Activated B cell treated with CpG ODN at 0.5 μM for 24 hours (primary cell): ENCODE measurements at regions of chr11 and their contacts with region 1.

Region 1: DNA sequence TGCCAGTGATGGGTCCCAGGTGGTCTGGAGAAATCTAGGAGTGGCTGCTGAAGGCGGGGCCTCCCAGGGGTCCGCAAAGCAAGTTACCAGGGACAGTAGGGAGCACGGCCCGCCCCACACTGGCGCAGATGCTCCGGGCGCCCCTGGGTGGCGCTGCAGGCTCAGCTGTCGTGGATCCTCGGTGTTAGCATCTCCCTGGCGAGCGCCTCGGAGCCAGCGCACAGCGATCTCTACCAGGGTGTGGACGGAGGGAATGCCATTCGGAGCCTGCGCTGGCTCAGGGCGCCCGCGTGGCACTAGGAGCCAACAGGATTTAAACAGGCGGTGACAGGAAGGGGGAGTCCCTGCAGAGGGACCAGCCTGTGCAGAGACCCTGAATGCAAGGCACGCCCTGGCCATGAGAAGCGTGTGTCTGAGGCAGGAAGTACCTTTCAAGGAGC is 20.2 kb downstream of the FADS3 start:
- DNase-seq: peak; percentile 76
- ATAC-seq: peak; percentile 95
- H3K4me3 Mint-ChIP-seq: peak overlapping the region; percentile 75
- H3K27ac Mint-ChIP-seq: peak overlapping the region; percentile 46
- H3K4me1 Mint-ChIP-seq: peaks cover 10% of the 10 kb centered on the region
- H3K27me3 Mint-ChIP-seq: no peaks in the 10 kb centered on the region
- CTCF ChIP-seq: peak; percentile 89

Region 2: DNA sequence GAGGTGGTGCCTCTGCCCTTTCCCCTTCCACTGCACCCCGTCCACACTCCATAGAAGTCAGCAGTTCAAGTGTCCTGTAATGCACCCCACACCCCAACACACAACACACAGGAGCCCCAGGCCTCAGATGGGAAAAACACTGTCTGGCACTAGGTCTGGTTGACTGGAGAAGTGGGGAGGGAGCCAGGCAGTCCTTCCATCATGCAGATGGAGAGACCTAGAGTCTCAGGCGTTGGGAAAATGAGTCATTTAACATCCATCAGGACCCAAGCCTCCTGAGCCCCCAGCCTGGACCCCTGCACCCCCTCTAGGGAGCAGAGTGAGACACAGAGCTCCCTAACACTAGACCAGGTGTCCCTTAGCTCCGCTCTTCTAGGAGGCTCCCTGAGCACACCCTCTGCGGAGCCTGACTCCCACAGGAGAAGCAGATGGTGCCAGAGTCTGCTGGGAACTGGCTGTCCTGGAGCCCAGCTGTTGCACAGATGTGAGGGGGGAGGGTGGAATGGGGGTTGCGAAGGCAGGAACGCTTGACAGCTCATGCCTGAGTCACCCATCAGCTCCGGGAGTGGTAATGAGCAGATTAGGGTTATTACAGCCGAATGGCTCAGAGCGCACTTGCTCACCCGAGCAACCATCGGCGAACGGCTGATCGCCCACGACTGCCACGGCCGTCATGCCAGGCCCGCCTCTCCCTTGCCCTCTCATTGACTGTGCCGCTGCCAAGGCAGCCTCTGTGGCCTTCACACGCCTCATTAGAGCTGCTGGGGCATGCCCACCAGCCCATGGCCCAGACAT is 268.2 kb before region 1 on chr11:
- CTCF ChIA-PET with region 1: no interaction called
- POLR2A ChIA-PET with region 1: no interaction called
- intact Hi-C with region 1: no loop called
- DNase-seq: no peak
- ATAC-seq: no peak
- H3K4me3 Mint-ChIP-seq: no peak overlapping the region
- H3K27ac Mint-ChIP-seq: no peak overlapping the region
- H3K4me1 Mint-ChIP-seq: no peaks in the 10 kb centered on the region
- H3K27me3 Mint-ChIP-seq: peaks cover 7% of the 10 kb centered on the region
- CTCF ChIP-seq: no peak

Region 3: DNA sequence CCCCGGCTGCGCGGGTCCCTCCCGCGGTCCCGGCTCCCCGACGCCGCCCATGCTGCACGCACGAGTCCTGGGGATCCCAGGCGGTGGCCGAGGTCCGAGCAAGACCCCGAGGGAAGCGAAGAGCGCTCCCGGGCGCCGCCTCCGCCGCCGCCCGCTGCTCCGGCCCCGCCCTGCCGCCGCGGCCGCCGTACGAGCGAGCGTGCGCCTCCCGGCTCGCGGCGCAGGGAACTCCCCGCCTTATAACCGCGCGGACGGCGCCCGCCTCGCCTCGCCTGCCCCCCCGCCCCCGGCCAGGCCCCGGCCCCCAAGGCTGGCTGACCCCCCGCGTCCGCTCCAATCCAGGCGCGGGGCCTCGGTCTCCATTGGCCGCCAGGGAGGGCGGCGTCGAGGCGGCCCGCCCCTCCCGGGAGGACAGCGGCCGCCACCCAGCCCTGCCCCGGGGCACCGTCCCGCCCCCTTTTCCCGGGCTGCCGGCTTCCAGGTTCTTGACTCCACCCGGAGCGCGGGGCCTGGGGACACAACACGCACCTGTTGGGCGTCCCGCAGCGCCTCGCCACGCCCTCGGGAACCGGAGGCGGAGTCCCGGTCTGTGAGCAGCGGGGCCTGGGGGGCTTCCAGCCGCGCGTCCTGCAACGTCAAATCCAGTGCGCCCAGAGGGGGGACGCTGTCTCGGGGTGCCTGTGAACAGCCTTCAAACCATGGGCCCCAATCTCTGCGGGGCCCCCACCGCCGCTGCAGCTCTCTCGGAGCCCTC is 20.3 kb after region 1 on chr11 and contains the start of gene FADS3:
- CTCF ChIA-PET with region 1: interaction called, 34 read pairs
- POLR2A ChIA-PET with region 1: interaction called, 3 read pairs
- intact Hi-C with region 1: loop called (anchors 1 kb)
- DNase-seq: peak; percentile 81
- ATAC-seq: peak; percentile 63
- H3K4me3 Mint-ChIP-seq: peak within 1 kb of the TSS; percentile 88
- H3K27ac Mint-ChIP-seq: peak within 1 kb of the TSS; percentile 87
- H3K4me1 Mint-ChIP-seq: peaks cover 41% of the 10 kb centered on the region
- H3K27me3 Mint-ChIP-seq: no peaks in the 10 kb centered on the region
- CTCF ChIP-seq: no peak
- total RNA-seq, gene FADS3: 121 and 135 TPM in 2 replicates

Region 4: GRCh38 chr11:61899146-61899841 is 28.1 kb after region 1 on chr11:
- CTCF ChIA-PET with region 1: interaction called, 34 read pairs
- POLR2A ChIA-PET with region 1: interaction called, 4 read pairs
- intact Hi-C with region 1: loop called (anchors 1 kb)
- DNase-seq: peak; percentile 97
- ATAC-seq: peak; percentile 99
- H3K4me3 Mint-ChIP-seq: no peak overlapping the region
- H3K27ac Mint-ChIP-seq: peak overlapping the region; percentile 50
- H3K4me1 Mint-ChIP-seq: peaks cover 22% of the 10 kb centered on the region
- H3K27me3 Mint-ChIP-seq: no peaks in the 10 kb centered on the region
- CTCF ChIP-seq: peak; percentile 90

Region 5: GRCh38 chr11:61912530-61912898 is 41.3 kb after region 1 on chr11:
- CTCF ChIA-PET with region 1: no interaction called
- POLR2A ChIA-PET with region 1: no interaction called
- intact Hi-C with region 1: no loop called
- DNase-seq: no peak
- ATAC-seq: no peak
- H3K4me3 Mint-ChIP-seq: no peak overlapping the region
- H3K27ac Mint-ChIP-seq: no peak overlapping the region
- H3K4me1 Mint-ChIP-seq: no peaks in the 10 kb centered on the region
- H3K27me3 Mint-ChIP-seq: peaks cover 24% of the 10 kb centered on the region
- CTCF ChIP-seq: no peak

Region 6: DNA sequence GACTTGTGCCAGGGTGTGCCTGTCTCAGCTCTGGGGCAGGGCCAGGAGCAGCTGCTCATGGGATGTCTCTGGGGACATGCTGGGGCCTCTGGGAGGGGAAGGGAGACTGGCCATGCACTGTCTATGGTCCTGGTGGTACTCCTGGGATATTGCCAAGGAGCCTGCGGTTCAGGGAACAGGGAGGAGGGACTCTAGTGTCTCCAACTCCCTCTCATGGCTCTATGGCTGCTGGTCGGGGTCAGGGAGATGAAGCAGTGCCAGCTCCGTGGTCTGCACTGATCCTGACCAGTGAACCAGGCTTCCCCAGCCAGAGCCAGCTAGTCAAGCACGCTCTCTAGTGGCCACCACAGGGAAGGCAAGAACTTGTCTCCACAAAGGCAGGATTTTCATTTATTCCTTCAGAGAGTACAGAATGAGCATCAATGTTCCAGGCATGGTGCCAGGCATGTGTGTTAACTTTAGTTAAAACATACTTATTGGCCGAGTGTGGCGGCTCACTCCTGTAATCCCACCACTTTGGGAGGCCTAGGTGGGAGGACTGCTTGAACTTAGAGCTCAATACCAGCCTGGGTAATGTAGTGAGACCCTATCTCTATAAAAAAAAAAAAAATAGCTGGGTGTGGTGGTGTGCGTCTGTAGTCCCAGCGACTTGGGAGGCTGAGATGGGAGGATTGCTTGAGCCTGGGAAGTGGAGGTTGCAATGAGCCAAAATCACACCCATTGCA is 76.5 kb after region 1 on chr11:
- CTCF ChIA-PET with region 1: interaction called, 78 read pairs
- POLR2A ChIA-PET with region 1: interaction called, 3 read pairs
- intact Hi-C with region 1: loop called (anchors 1 kb)
- DNase-seq: peak; percentile 51
- ATAC-seq: peak; percentile 92
- H3K4me3 Mint-ChIP-seq: no peak overlapping the region
- H3K27ac Mint-ChIP-seq: no peak overlapping the region
- H3K4me1 Mint-ChIP-seq: peaks cover 11% of the 10 kb centered on the region
- H3K27me3 Mint-ChIP-seq: no peaks in the 10 kb centered on the region
- CTCF ChIP-seq: peak; percentile 35

Region 7: DNA sequence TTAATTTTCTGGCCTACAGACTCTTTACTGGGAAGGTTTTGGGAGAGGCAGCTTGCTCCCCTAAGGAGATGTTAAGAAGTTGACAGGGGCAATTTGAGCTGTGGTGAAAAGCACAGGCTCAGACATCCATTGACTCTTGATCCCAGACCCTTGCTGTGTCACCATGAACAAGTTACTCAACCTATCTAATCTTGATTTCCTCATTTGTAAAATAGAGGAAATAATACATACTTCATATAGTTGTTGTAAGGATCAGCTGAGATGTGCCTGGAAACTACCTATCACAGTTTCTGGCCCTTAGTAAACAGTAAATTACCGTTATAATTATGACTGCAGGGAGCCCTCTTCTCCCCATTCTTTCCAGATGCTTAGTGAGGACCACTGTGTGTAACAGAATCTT is 444.3 kb after region 1 on chr11:
- CTCF ChIA-PET with region 1: interaction called, 4 read pairs
- POLR2A ChIA-PET with region 1: no interaction called
- intact Hi-C with region 1: loop called (anchors 1 kb)
- DNase-seq: no peak
- ATAC-seq: no peak
- H3K4me3 Mint-ChIP-seq: no peak overlapping the region
- H3K27ac Mint-ChIP-seq: no peak overlapping the region
- H3K4me1 Mint-ChIP-seq: peaks cover 12% of the 10 kb centered on the region
- H3K27me3 Mint-ChIP-seq: peaks cover 39% of the 10 kb centered on the region
- CTCF ChIP-seq: no peak